Common myeloid progenitor, CD34-positive (primary cell): ENCODE measurements at regions of chr7 and their contacts with region 1.

Region 1: GRCh38 chr7:5435289-5436002 is 11.8 kb upstream of the TNRC18 start:
- DNase-seq: no peak
- H3K4me3 ChIP-seq: no peak overlapping the region
- H3K27ac ChIP-seq: no peak overlapping the region
- H3K4me1 ChIP-seq: peaks cover 0 to 35% (median 30%) of the 10 kb centered on the region in 4 experiments
- H3K27me3 ChIP-seq: no peaks in the 10 kb centered on the region

Region 2: DNA sequence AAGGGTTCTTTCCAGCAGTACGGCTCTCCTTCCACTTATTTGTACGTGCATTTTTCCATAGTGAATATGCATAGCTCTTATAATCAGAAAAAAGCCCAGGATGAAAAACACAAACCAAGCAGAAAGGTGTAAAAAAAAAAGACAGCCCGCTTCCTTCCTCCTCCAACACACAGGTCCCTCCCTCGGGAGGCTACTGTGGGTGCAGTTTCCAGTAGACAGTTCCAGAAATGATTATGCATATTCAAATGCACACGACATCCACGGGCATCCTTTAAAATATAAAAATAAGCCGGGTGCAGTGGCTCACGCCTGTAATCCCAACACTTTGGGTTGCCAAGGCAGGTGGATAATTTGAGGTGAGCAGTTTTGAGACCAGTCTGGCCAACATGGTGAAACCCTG is 71.7 kb before region 1 on chr7:
- CTCF ChIA-PET with region 1: interaction called, 10 read pairs
- POLR2A ChIA-PET with region 1: no interaction called
- DNase-seq: no peak
- H3K4me3 ChIP-seq: peak overlapping the region in 1 of 7 experiments; percentile 11
- H3K27ac ChIP-seq: peak overlapping the region in 1 of 2 experiments; percentile 34
- H3K4me1 ChIP-seq: peaks cover 0 to 27% (median 22%) of the 10 kb centered on the region in 4 experiments
- H3K27me3 ChIP-seq: no peaks in the 10 kb centered on the region

Region 3: DNA sequence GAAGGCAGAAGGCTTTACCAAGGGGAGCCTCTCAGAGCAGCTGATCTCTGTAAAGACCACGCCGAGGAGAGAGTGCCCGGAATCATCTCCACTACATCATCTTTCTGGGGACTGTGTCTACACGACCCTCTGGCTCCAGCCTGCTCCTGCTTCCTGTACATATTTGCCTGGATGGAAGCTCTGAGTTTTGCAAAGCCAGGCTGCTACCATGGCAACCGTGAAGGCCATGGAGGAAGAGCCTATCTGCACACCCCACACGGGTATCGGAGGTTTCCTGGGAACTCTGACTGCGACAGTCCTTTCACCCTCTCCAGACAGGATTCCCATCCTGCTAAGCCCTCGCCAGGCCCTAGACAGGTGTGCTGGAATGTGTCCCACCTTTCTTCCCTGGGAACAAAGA is 71.6 kb after region 1 on chr7:
- CTCF ChIA-PET with region 1: no interaction called
- POLR2A ChIA-PET with region 1: no interaction called
- DNase-seq: no peak
- H3K4me3 ChIP-seq: no peak overlapping the region
- H3K27ac ChIP-seq: no peak overlapping the region
- H3K4me1 ChIP-seq: no peaks in the 10 kb centered on the region
- H3K27me3 ChIP-seq: no peaks in the 10 kb centered on the region

Region 4: GRCh38 chr7:5532520-5533335 is 97.3 kb after region 1 on chr7:
- CTCF ChIA-PET with region 1: no interaction called
- POLR2A ChIA-PET with region 1: no interaction called
- DNase-seq: peak; percentile 72 to 91 (median 88)
- H3K4me3 ChIP-seq: peak overlapping the region; percentile 24 to 90 (median 57)
- H3K27ac ChIP-seq: peak overlapping the region in 1 of 2 experiments; percentile 74
- H3K4me1 ChIP-seq: peaks cover 5 to 53% (median 47%) of the 10 kb centered on the region in 4 experiments
- H3K27me3 ChIP-seq: no peaks in the 10 kb centered on the region